ENCODE measurements at regions of chr20 and their contacts with region 1.

Region 1: GRCh38 chr20:17968366-17969279 is at the starts of genes MGME1 and SNX5:
- DNase-seq: peak; percentile 98
- ATAC-seq: peak; percentile 83
- H3K4me3 Mint-ChIP-seq: peak within 1 kb of the TSS; percentile 97
- H3K27ac Mint-ChIP-seq: peak within 1 kb of the TSS; percentile 97
- H3K4me1 Mint-ChIP-seq: peaks cover 78% of the 10 kb centered on the region
- H3K27me3 Mint-ChIP-seq: no peaks in the 10 kb centered on the region
- CTCF ChIP-seq: no peak
- total RNA-seq, gene MGME1: 19.0 TPM in 2 replicates
- total RNA-seq, gene SNX5: 125 and 139 TPM in 2 replicates

Region 2: DNA sequence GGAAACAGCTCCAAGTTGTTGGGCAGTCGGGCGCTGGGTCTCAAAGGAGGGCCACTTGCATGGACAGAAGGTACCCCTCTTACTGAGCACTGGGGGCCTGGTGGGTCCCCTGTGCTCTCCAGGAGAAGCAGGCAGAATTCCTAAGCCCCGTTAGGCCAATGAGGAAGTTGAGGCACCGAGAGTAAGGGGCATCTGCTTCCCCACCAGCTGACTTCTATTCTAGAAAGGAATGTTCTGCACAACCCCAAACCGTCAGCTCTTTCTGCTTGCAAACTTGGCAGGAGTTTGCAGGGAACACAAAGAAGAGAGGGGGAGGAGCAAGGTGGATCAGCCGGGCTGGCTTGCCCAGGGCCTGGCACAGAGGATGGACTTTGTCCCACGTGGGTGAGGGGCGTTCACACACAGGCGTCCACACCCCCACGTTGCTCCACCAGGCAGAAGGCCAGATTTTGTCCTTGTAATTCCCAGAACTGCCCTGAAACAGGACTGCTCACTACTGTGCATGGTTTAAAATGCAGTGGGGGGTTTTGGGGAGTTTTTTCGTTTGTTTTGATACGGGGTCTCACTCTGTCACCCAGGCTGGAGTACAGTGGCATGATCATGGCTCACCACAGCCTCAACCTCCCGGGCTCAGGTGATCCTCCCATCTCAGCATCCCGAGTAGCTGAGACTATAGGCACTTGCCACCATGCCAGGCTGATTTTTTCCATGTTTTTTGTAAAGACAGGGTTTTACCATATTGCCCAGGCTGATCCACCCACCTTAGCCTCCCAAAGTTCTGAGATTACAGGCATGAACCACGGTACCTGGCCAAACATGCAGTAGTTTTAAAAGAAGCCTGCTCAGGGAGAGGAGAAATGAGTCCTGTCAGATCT is 93.3 kb before region 1 on chr20:
- CTCF ChIA-PET with region 1: no interaction called
- POLR2A ChIA-PET with region 1: interaction called, 4 read pairs
- intact Hi-C with region 1: loop called (anchors 5 kb)
- DNase-seq: no peak
- ATAC-seq: no peak
- H3K4me3 Mint-ChIP-seq: no peak overlapping the region
- H3K27ac Mint-ChIP-seq: no peak overlapping the region
- H3K4me1 Mint-ChIP-seq: peaks cover 63% of the 10 kb centered on the region
- H3K27me3 Mint-ChIP-seq: peaks cover 1% of the 10 kb centered on the region
- CTCF ChIP-seq: no peak

Region 3: DNA sequence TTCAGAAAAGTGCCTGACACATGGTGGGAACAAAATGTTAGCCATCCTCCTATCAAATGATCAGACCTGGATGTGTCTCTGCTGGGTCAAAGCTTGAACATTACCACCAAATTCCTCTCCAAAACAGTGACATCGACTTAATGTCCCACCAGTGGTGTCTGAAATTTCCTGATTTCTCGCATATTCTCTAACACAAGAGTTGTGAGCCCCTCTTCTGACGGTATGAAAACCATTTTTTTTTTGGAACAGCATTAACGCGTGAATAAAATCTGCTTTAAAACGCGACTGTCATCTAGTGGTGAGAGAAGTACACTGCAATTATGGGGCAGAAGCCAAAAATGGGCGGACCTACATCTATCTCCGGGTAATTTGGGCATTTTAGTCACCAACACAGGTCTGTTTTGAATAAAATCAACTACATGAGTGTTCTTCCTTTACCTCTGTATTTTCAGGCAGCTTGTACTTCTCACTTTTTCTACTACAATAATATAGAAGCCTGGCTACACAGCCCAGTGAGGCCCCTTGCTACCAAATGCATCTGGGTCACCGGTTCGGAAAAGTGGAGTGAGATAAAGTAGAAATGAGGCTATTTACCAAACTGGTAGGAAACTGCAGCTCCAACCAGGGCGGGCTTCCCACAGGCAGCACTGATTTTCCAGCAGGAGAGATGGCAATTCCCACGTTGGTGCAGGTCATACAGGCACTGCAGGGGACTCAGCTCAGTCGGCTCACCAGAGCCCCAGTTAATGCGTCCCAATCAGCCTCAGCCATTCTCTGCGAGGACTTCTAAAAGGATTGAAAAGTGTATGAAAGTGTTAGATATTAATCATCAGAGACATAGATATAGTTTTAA is 27.6 kb after region 1 on chr20:
- CTCF ChIA-PET with region 1: interaction called, 6 read pairs
- POLR2A ChIA-PET with region 1: interaction called, 7 read pairs
- intact Hi-C with region 1: loop called (anchors 1 kb)
- DNase-seq: no peak
- ATAC-seq: peak; percentile 91
- H3K4me3 Mint-ChIP-seq: no peak overlapping the region
- H3K27ac Mint-ChIP-seq: peak overlapping the region; percentile 20
- H3K4me1 Mint-ChIP-seq: peaks cover 29% of the 10 kb centered on the region
- H3K27me3 Mint-ChIP-seq: no peaks in the 10 kb centered on the region
- CTCF ChIP-seq: peak; percentile 89

Region 4: DNA sequence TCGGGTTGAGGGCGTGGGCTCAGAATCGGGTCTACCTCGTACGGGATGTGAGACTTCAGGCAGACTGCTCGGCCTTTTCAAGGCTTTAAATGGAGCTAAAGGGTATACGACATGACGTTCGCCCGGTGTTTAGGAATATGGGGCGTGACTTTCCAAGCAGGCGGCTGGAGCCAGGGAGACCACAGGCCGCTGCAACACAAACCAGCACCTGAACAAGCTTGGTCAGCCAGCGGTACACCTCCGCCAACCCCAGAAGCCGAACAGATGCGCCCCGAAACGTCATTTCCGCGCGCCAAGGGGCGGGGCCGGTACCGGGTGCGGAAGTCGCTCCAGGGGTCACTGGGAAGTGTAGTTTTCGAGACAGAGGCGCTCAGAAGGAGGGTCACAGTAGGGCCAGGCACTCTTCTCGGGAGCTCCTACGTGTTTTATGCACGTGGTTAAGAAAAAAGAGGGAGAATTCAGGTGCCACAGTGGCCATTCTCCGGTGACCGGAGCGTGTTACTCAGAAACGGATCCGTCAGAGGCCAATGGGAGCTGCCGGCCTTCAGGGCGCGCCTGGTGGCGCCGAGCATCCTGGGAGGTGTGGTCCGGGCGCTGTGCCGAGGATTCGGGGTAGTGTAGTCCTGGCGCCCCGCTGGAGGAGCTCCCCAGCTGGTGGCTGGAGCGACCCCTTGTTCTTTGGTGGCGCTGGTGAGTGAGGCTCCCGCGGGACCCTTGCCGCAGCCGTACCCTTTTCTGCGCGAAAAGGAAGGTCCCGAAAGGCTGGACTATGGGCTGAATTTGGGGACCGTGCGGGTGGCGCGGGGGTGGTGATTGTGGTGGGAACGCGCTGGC is 319.5 kb after region 1 on chr20 and contains the start of gene ZNF133:
- CTCF ChIA-PET with region 1: no interaction called
- POLR2A ChIA-PET with region 1: interaction called, 4 read pairs
- intact Hi-C with region 1: loop called (anchors 1 kb)
- DNase-seq: peak; percentile 99
- ATAC-seq: peak; percentile 96
- H3K4me3 Mint-ChIP-seq: peak within 1 kb of the TSS; percentile 92
- H3K27ac Mint-ChIP-seq: peak within 1 kb of the TSS; percentile 97
- H3K4me1 Mint-ChIP-seq: peaks cover 29% of the 10 kb centered on the region
- H3K27me3 Mint-ChIP-seq: peaks cover 16% of the 10 kb centered on the region
- CTCF ChIP-seq: no peak
- total RNA-seq, gene ZNF133: 7.7 and 8.0 TPM in 2 replicates

Region 5: DNA sequence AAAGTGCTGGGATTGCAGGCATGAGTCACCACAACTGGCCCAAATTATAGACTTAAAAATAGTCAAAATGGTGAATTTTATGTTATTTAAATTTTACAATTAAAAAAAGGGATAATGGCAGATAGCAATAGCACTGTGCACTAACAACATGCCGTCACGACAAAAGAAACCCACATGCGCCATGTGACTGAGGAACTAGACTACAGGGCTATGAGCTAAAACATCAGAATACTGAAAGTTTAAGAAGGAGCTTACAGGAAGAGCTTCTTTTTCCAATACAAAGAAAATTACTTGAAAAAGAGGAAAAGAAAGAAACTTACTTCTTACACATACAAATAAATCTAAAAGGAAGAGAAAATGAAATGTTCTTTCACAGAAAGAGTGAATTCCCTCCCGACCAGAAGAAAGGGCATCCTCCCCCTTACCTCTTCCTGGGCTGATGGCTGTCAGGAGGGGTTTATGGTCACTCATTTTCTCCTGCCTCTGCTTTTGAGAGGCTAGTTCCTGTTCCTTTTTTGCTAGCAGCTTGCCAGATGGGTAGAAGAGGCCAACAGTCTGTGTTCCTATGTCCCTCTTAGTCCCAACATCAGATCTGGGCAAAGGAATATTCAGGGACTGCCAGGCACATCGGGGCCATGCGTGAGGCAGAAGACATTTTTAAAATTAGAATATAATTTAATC is 443.7 kb after region 1 on chr20:
- CTCF ChIA-PET with region 1: no interaction called
- POLR2A ChIA-PET with region 1: no interaction called
- intact Hi-C with region 1: no loop called
- DNase-seq: no peak
- ATAC-seq: peak; percentile 41
- H3K4me3 Mint-ChIP-seq: peak overlapping the region; percentile 69
- H3K27ac Mint-ChIP-seq: peak overlapping the region; percentile 88
- H3K4me1 Mint-ChIP-seq: peaks cover 18% of the 10 kb centered on the region
- H3K27me3 Mint-ChIP-seq: no peaks in the 10 kb centered on the region
- CTCF ChIP-seq: no peak

Region 6: DNA sequence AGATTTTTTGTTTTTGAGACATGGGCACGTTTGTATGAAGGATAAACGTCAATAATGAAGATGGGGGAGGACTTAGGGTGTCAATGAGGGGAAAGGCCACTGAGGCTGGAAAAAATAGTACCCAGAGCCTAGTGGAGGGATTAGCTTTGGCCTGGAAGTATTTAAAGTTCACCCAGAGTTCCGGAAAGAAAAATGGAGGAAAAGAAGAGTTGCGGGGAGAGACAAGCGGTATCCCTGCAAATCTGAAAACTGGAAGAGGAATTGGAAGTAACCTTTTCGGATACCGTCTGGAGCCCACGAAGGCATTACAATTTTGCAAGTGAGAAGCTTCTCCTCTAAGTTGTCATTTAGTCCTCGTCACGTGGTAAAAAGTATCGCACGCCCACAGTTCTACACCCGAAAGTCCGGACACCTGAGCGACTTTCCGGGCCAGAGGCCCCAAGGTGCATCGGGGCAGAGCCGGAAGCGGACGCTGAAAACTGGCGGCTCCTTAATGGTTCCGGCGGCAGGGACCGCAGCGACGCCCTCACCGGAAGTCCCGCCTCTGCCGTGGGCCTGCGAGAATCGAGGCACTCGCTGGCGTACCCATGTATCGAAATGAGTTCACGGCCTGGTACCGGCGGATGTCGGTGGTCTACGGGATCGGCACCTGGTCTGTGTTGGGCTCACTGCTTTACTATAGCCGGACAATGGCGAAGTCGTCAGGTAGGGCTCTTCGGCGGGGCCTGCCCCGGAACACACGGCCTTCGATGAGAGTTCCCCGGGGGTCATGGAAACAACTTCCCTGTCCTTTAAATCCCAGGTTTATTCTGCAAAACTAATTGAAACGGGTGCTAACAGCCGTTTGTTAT is 598.5 kb after region 1 on chr20 and contains the start of gene SMIM26:
- CTCF ChIA-PET with region 1: no interaction called
- POLR2A ChIA-PET with region 1: no interaction called
- intact Hi-C with region 1: loop called (anchors 5 kb)
- DNase-seq: peak; percentile 91
- ATAC-seq: peak; percentile 96
- H3K4me3 Mint-ChIP-seq: peak within 1 kb of the TSS; percentile 94
- H3K27ac Mint-ChIP-seq: peak within 1 kb of the TSS; percentile 94
- H3K4me1 Mint-ChIP-seq: peaks cover 23% of the 10 kb centered on the region
- H3K27me3 Mint-ChIP-seq: no peaks in the 10 kb centered on the region
- CTCF ChIP-seq: no peak
- total RNA-seq, gene SMIM26: 48.9 and 51.7 TPM in 2 replicates

Region 7: GRCh38 chr20:19909725-19910124 is 1941.1 kb after region 1 on chr20:
- CTCF ChIA-PET with region 1: no interaction called
- POLR2A ChIA-PET with region 1: no interaction called
- intact Hi-C with region 1: loop called (anchors 10 kb)
- DNase-seq: no peak
- ATAC-seq: no peak
- H3K4me3 Mint-ChIP-seq: no peak overlapping the region
- H3K27ac Mint-ChIP-seq: no peak overlapping the region
- H3K4me1 Mint-ChIP-seq: peaks cover 29% of the 10 kb centered on the region
- H3K27me3 Mint-ChIP-seq: no peaks in the 10 kb centered on the region
- CTCF ChIP-seq: no peak